Mammary epithelial cell (primary cell): ENCODE measurements at regions of chr11 and their contacts with region 1.

Region 1: DNA sequence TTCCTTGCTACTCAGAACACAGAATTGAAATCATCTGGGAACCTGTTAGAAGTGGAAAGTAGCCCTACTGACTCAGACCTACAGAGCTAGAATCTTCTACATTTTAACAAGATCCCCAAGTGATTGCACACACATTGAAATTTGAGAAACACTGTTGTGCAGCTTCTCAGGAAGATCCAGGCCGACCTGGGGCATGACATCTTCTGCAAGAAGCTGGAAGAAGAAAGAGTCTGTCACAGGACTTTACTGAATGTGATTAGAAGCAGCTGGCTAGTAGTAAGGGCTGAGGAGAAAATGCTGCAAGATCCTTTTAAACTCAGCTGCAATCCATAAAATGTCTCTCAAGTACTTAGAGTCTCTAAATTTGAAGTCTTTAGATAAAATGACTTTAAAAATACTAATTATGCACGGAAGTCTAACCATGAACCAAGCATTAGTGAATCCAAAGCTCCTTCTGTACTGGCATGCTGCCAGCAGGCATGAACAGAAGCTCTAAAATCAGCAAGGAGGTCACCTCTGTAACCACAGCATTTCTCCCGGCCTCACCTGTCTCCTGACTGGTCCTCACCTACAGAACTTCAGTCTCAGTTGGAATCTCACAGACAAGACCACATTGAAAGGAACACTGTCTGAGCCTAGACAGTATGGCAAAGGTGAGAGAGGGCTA is 85.0 kb downstream of the SERGEF start:
- DNase-seq: no peak
- H3K4me3 ChIP-seq: no peak overlapping the region
- H3K27ac ChIP-seq: no peak overlapping the region
- H3K4me1 ChIP-seq: no peaks in the 10 kb centered on the region
- H3K27me3 ChIP-seq: no peaks in the 10 kb centered on the region
- CTCF ChIP-seq: no peak

Region 2: GRCh38 chr11:17439316-17439782 is 488.5 kb before region 1 on chr11:
- CTCF ChIA-PET with region 1: no interaction called
- dilution Hi-C with region 1: no loop called
- in situ Hi-C with region 1: no loop called
- intact Hi-C with region 1: no loop called
- DNase-seq: no peak
- H3K4me3 ChIP-seq: no peak overlapping the region
- H3K27ac ChIP-seq: no peak overlapping the region
- H3K4me1 ChIP-seq: no peaks in the 10 kb centered on the region
- H3K27me3 ChIP-seq: peaks cover 5% of the 10 kb centered on the region
- CTCF ChIP-seq: no peak

Region 3: GRCh38 chr11:17846852-17847453 is 80.9 kb before region 1 on chr11:
- CTCF ChIA-PET with region 1: no interaction called
- dilution Hi-C with region 1: no loop called
- in situ Hi-C with region 1: no loop called
- intact Hi-C with region 1: no loop called
- DNase-seq: peak; percentile 31
- H3K4me3 ChIP-seq: no peak overlapping the region
- H3K27ac ChIP-seq: no peak overlapping the region
- H3K4me1 ChIP-seq: peaks cover 18% of the 10 kb centered on the region
- H3K27me3 ChIP-seq: no peaks in the 10 kb centered on the region
- CTCF ChIP-seq: peak; percentile 28 to 51

Region 4: DNA sequence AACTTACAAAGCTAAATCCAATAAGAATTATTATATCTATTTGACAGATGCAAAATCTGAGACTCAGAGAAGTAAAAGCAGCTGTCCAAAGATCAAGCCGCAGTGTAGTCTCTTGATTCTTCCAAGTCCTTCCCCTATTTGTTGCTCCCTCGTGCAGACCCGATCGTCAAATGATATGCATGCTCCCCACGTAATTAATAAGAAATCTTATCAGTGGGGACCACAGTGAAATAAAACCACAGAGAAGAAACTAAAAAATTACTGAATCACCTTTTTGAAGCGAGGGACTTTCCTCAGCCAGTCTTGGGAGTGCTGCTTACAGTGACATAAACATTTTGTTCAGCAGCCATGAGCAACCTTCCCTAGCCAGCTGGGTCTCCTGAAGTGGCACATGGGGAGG is 20.5 kb after region 1 on chr11:
- CTCF ChIA-PET with region 1: no interaction called
- dilution Hi-C with region 1: no loop called
- in situ Hi-C with region 1: no loop called
- intact Hi-C with region 1: no loop called
- DNase-seq: no peak
- H3K4me3 ChIP-seq: no peak overlapping the region
- H3K27ac ChIP-seq: no peak overlapping the region
- H3K4me1 ChIP-seq: no peaks in the 10 kb centered on the region
- H3K27me3 ChIP-seq: no peaks in the 10 kb centered on the region
- CTCF ChIP-seq: no peak

Region 5: DNA sequence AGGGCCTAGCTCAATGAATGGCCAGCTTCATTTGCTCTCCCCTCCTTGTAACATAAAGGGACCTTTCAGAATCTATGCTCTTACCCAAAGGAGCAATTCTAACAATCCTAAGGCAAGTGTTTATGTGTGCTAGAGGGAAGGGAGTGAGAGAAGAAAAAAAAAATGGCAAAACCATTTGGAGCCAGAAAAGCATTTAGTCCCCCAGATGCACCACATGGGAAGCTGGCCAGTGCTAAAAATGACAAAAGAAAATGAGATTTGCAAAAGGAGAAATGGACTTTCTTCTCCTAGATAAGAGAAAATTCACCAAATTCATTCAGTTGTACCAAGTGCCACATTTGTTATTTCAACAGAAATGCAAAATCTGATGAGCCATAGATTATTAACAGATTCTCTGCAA is 32.3 kb after region 1 on chr11:
- CTCF ChIA-PET with region 1: no interaction called
- dilution Hi-C with region 1: loop called (anchors 5 kb)
- in situ Hi-C with region 1: no loop called
- intact Hi-C with region 1: no loop called
- DNase-seq: no peak
- H3K4me3 ChIP-seq: no peak overlapping the region
- H3K27ac ChIP-seq: no peak overlapping the region
- H3K4me1 ChIP-seq: no peaks in the 10 kb centered on the region
- H3K27me3 ChIP-seq: no peaks in the 10 kb centered on the region
- CTCF ChIP-seq: no peak

Region 6: GRCh38 chr11:18294862-18295261 is 367.0 kb after region 1 on chr11:
- CTCF ChIA-PET with region 1: no interaction called
- dilution Hi-C with region 1: no loop called
- in situ Hi-C with region 1: no loop called
- intact Hi-C with region 1: no loop called
- DNase-seq: no peak
- H3K4me3 ChIP-seq: no peak overlapping the region
- H3K27ac ChIP-seq: no peak overlapping the region
- H3K4me1 ChIP-seq: no peaks in the 10 kb centered on the region
- H3K27me3 ChIP-seq: no peaks in the 10 kb centered on the region
- CTCF ChIP-seq: no peak